Calu3 (cell line): ENCODE measurements at regions of chr6 and their contacts with region 1.

Region 1: GRCh38 chr6:31087494-31088089 is 24.8 kb downstream of the C6orf15 start:
- DNase-seq: peak; percentile 95
- H3K4me3 Mint-ChIP-seq: no peak overlapping the region
- H3K27ac Mint-ChIP-seq: no peak overlapping the region
- H3K4me1 Mint-ChIP-seq: peaks cover 33% of the 10 kb centered on the region
- H3K27me3 Mint-ChIP-seq: no peaks in the 10 kb centered on the region
- CTCF ChIP-seq: peak; percentile 89

Region 2: DNA sequence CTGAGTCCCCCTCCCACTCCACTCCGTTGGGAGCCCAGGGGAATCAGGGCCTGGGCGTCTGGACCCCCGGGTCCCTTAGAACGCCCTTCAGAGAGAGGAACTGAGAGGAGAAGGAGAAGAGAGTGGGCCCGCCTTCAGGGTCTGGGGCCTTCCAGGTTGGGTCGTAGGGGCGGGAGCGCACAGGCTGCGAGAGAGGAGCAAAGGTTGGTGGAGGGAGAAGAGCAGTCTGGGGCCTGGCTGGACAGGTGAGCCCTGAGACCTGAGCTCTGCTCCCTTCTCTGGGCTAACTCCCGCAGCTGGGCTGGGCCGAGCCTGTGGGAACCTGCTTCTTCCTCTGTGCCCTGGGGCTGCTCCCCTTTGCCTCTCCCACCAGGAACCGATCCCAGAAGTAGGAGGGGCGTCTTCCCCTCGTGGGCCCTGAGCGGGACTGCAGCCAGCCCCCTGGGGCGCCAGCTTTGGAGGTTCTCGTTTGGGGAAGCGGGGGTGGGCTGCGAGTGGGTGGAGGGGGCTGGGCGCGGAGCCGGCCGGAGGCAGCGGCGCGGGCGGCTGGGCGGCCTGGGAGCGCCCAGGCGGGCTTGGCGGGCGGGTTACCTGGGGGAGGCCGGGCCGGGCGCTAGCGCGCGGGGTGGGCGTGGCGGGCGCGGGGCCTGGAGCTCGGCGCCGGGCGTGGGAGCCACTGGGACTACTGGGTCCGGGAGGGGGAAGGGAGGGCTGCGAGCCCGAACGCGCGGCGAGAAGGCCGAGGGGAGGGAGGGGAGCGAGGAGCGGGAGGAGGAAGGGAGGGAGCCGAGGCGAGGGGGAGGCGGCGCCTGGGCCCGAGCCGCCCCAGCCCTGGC is 203.7 kb before region 1 on chr6 and contains the start of gene DDR1:
- CTCF ChIA-PET with region 1: interaction called, 11 read pairs
- intact Hi-C with region 1: no loop called
- DNase-seq: peak; percentile 82
- H3K4me3 Mint-ChIP-seq: peak within 1 kb of the TSS; percentile 89
- H3K27ac Mint-ChIP-seq: peak within 1 kb of the TSS; percentile 94
- H3K4me1 Mint-ChIP-seq: peaks cover 63% of the 10 kb centered on the region
- H3K27me3 Mint-ChIP-seq: peaks cover 16% of the 10 kb centered on the region
- CTCF ChIP-seq: no peak
- total RNA-seq, gene DDR1: 489 and 580 TPM in 2 replicates

Region 3: DNA sequence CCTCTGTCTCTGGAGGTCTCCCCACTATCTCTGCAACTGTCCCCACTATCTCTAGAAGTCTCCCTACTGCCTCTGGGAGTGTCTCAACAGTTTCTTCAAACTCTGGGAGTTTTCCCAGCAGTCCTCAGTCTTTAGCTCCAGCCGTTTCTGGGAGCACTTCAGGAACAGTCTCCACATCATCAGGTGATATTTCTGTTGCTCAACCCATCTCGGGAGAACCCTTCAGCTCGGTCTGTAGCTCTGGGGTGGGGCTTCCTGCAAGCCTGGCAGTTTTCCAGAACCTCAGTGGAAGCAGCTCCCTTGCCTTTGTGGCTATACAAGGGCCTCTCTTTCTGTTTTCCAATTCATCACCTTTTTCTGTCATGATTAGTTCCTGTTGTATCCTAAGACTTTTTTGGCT is 152.6 kb before region 1 on chr6:
- CTCF ChIA-PET with region 1: interaction called, 11 read pairs
- intact Hi-C with region 1: no loop called
- DNase-seq: peak; percentile 83
- H3K4me3 Mint-ChIP-seq: no peak overlapping the region
- H3K27ac Mint-ChIP-seq: peak overlapping the region; percentile 67
- H3K4me1 Mint-ChIP-seq: peaks cover 68% of the 10 kb centered on the region
- H3K27me3 Mint-ChIP-seq: no peaks in the 10 kb centered on the region
- CTCF ChIP-seq: no peak

Region 4: GRCh38 chr6:31068669-31069340 is 18.8 kb before region 1 on chr6:
- CTCF ChIA-PET with region 1: interaction called, 33 read pairs
- intact Hi-C with region 1: no loop called
- DNase-seq: peak; percentile 94
- H3K4me3 Mint-ChIP-seq: no peak overlapping the region
- H3K27ac Mint-ChIP-seq: no peak overlapping the region
- H3K4me1 Mint-ChIP-seq: no peaks in the 10 kb centered on the region
- H3K27me3 Mint-ChIP-seq: peaks cover 5% of the 10 kb centered on the region
- CTCF ChIP-seq: peak; percentile 99

Region 5: DNA sequence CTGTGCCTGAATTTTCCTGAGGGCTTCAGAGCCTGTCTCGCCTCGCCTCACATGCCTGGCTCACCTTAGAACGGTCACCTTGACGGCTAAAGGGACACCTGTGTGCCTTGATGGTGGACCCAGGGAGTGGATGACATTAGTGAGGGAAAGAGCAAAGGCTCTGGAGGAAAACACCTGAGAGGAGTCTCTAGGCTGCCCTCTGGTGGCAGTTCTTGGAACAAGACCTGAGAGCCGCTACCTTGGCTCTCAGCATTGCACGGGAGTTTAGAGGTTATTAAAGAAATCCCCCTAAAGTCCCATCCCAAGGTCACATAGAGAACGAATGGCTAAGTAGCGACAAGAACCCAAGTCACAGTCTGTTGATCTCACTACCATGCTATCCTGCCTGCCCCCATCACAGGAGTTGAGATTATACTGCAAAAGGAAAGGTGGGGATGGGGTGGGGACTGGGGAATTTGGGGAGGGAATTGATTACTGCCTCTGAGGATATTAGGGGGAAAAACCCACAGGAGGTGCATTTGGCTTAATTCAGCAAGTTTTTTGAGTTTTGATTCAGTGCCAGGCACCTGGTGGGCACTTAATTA is 40.6 kb after region 1 on chr6:
- CTCF ChIA-PET with region 1: interaction called, 13 read pairs
- intact Hi-C with region 1: loop called (anchors 2 kb)
- DNase-seq: peak; percentile 92
- H3K4me3 Mint-ChIP-seq: no peak overlapping the region
- H3K27ac Mint-ChIP-seq: peak overlapping the region; percentile 45
- H3K4me1 Mint-ChIP-seq: peaks cover 50% of the 10 kb centered on the region
- H3K27me3 Mint-ChIP-seq: no peaks in the 10 kb centered on the region
- CTCF ChIP-seq: peak; percentile 99

Region 6: GRCh38 chr6:31293343-31293742 is 205.8 kb after region 1 on chr6:
- CTCF ChIA-PET with region 1: no interaction called
- intact Hi-C with region 1: no loop called
- DNase-seq: peak; percentile 36
- H3K4me3 Mint-ChIP-seq: no peak overlapping the region
- H3K27ac Mint-ChIP-seq: no peak overlapping the region
- H3K4me1 Mint-ChIP-seq: no peaks in the 10 kb centered on the region
- H3K27me3 Mint-ChIP-seq: peaks cover 100% of the 10 kb centered on the region
- CTCF ChIP-seq: no peak

Region 7: DNA sequence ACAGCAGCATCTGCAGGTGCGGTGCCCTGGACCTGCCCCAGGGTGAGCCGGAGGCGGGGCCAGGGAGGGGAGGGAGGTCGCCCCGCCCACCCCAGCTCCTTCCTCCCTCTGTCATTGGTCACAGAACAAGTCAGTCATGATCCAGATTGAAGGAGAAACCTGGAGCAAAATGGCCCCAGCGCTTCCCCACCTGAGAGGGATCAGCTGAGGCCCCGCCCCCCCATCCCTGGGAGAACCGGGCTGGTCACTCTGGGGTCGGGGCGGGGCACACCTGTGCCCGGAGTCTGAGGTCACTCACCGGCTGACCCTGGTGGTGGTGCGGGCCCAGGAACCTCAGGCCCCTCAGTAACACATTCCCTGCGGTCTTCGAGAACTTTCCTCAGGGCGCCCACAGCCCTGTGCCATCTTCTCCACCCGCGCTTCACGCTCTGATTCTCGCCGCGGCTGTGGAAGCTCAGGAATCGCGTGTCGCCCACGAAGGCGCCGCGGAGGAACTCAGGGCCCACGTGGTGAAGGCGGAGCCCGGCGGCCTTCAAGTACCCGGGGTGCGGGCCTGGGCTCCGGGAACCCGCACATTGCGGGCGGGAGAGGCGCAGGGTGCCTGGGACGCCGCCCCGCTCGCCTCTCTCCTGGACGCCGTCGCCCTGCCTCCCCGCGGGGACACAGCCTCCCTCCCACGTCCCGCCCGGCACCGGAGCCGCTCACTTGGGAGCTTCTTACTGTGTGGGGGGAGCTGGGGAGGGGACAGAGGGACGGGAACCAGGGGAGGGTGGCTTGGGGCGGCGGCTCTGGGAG is 220.7 kb after region 1 on chr6:
- CTCF ChIA-PET with region 1: no interaction called
- intact Hi-C with region 1: no loop called
- DNase-seq: no peak
- H3K4me3 Mint-ChIP-seq: peak overlapping the region; percentile 46
- H3K27ac Mint-ChIP-seq: no peak overlapping the region
- H3K4me1 Mint-ChIP-seq: no peaks in the 10 kb centered on the region
- H3K27me3 Mint-ChIP-seq: peaks cover 98% of the 10 kb centered on the region
- CTCF ChIP-seq: no peak